ENCODE measurements at regions of chr6 and their contacts with region 1.

Region 1: GRCh38 chr6:150068720-150069648 is at the start of gene ULBP3:
- DNase-seq: peak; percentile 83
- ATAC-seq: peak; percentile 90
- H3K4me3 Mint-ChIP-seq: peak within 1 kb of the TSS; percentile 74
- H3K27ac Mint-ChIP-seq: no peak within 1 kb of the TSS
- H3K4me1 Mint-ChIP-seq: peaks cover 12% of the 10 kb centered on the region
- H3K27me3 Mint-ChIP-seq: peaks cover 40% of the 10 kb centered on the region
- CTCF ChIP-seq: no peak
- total RNA-seq, gene ULBP3: 4.0 to 6.0 TPM (median 5.6 TPM) in 3 replicates

Region 2: GRCh38 chr6:150056156-150056555 is 12.8 kb before region 1 on chr6:
- CTCF ChIA-PET with region 1: interaction called, 37 read pairs
- POLR2A ChIA-PET with region 1: no interaction called
- DNase-seq: no peak
- ATAC-seq: no peak
- H3K4me3 Mint-ChIP-seq: no peak overlapping the region
- H3K27ac Mint-ChIP-seq: no peak overlapping the region
- H3K4me1 Mint-ChIP-seq: no peaks in the 10 kb centered on the region
- H3K27me3 Mint-ChIP-seq: peaks cover 47% of the 10 kb centered on the region
- CTCF ChIP-seq: no peak

Region 3: DNA sequence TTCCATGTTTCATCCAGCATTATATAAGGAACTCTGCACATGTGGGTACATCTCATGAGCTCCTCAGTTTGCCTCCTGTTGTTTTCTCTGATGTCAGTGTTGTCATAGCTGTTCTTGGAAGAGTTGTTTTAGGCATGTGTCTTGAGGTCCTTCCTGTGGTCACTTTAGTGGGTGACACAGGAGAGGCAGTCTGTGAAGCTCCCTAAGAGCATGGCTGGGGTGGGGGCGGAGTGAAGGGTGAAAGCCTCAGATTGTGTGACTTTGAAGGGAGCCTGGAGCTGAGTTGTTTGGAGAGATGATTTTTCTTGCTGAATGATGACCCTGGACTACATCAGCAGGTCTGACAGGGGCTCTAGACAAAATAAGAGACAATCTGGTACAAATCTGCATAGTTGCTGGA is 111.5 kb after region 1 on chr6:
- CTCF ChIA-PET with region 1: interaction called, 15 read pairs
- POLR2A ChIA-PET with region 1: no interaction called
- DNase-seq: no peak
- ATAC-seq: no peak
- H3K4me3 Mint-ChIP-seq: no peak overlapping the region
- H3K27ac Mint-ChIP-seq: no peak overlapping the region
- H3K4me1 Mint-ChIP-seq: no peaks in the 10 kb centered on the region
- H3K27me3 Mint-ChIP-seq: no peaks in the 10 kb centered on the region
- CTCF ChIP-seq: no peak

Region 4: GRCh38 chr6:150343434-150343833 is 274.4 kb after region 1 on chr6:
- CTCF ChIA-PET with region 1: interaction called, 14 read pairs
- POLR2A ChIA-PET with region 1: no interaction called
- DNase-seq: no peak
- ATAC-seq: no peak
- H3K4me3 Mint-ChIP-seq: no peak overlapping the region
- H3K27ac Mint-ChIP-seq: no peak overlapping the region
- H3K4me1 Mint-ChIP-seq: peaks cover 6% of the 10 kb centered on the region
- H3K27me3 Mint-ChIP-seq: no peaks in the 10 kb centered on the region
- CTCF ChIP-seq: no peak

Measured in WTC11 (cell line).